Aorta (tissue), 5 donors: ENCODE measurements at regions of chr3 and their contacts with region 1.

Region 1: DNA sequence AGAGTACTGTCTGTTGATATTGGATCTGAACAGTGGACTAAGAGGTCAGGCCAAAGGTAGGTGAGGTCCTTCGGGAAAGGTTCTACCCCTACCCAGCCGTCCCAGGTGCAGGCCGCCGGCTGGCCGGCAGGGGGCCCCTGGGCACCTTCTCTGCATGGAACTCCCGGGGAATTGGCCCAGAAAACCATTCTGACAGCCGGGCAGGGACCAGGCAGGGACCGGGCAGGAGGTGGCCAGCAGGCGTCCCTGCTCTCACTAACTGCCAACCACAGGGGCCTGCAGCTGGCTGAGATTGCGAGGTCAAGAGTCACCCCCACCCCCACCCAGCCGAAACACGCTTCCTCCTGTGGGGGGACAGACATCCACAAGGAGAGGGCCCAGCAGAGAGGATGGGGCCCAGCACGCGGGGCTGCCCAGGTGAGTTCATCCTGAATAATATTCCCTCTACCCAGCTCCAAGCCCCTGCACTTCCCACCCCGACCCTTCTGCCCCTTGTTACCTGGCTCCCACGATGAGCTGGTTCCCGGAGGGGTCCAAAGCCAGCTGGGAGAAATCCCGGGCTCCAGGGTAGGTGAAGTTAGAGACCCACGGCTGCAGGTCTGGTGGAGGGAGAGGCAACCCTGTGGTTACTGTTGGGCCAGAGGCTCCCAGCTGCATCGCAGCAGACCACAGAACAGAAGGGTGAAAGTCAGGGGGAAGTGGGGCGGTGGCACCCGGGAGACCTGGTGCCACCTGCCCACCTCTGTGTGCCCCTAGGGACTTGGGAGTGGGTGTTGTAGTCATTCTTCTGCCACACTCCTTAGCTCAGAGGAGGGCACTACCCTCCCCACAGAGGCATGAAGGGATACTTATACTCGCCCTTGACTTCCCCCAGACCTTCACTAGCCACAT is 84.4 kb downstream of the SEMA5B start:
- DNase-seq: peak; percentile 82 to 90
- ATAC-seq: peak; percentile 88
- H3K4me3 ChIP-seq: no peak overlapping the region
- H3K27ac ChIP-seq: no peak overlapping the region
- H3K4me1 ChIP-seq: no peaks in the 10 kb centered on the region
- H3K27me3 ChIP-seq: no peaks in the 10 kb centered on the region

Region 2: DNA sequence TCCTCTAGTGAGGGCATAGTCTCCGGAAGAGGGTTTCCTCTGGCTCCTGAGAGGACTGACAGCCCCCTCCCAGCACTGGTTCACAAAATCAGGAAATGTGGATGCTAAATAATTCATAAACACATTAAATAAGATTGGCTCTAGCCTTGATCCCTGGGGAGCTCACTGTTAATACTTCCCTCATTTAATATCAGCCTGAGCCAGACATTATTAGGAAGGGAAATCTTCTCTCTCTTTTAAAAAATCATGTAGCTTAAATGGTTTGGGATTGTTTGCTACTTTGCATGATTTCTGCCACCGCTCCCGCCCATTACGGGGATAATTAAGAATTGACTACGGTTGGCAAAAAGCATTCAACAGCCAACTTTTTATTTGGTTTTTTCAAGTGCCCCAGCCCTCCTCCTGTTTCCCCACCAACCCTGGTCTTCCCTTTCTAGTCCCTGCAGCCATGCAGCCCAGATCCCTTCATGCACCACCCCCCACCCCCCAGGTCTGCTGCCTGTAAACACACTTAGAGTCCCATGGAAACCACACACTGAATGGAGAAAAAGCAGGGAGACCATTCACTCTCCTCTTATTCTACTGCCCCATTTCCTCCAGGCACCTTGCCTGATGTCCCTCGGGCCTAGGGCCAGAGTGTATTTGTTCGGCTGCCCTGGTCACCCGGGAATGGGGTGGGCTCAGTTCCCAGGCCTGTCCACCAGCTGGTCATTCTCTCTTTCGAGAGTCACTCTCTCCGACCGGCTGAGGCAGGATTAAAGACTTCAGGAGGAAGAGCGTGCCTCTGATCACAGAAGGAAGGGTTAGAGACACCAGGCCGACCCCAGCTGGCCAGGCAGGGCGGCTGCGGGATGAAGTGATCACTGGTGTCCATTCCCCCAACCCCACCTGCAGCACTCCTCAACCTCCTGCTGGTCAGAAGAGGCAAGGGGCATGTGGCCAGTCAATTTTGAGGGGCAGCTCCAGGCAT is 39.3 kb after region 1 on chr3:
- intact Hi-C with region 1: loop called in 1 of 2 experiments (anchors 5 kb)
- DNase-seq: no peak
- ATAC-seq: no peak
- H3K4me3 ChIP-seq: no peak overlapping the region
- H3K27ac ChIP-seq: no peak overlapping the region
- H3K4me1 ChIP-seq: peaks cover 0 to 9% of the 10 kb centered on the region in 2 donors
- H3K27me3 ChIP-seq: no peaks in the 10 kb centered on the region

Region 3: GRCh38 chr3:123028233-123028828 is 85.1 kb after region 1 on chr3:
- intact Hi-C with region 1: loop called (anchors 1 to 2 kb)
- DNase-seq: no peak
- ATAC-seq: peak; percentile 77
- H3K4me3 ChIP-seq: peak overlapping the region; percentile 40 to 65
- H3K27ac ChIP-seq: no peak overlapping the region
- H3K4me1 ChIP-seq: no peaks in the 10 kb centered on the region
- H3K27me3 ChIP-seq: no peaks in the 10 kb centered on the region

Region 4: DNA sequence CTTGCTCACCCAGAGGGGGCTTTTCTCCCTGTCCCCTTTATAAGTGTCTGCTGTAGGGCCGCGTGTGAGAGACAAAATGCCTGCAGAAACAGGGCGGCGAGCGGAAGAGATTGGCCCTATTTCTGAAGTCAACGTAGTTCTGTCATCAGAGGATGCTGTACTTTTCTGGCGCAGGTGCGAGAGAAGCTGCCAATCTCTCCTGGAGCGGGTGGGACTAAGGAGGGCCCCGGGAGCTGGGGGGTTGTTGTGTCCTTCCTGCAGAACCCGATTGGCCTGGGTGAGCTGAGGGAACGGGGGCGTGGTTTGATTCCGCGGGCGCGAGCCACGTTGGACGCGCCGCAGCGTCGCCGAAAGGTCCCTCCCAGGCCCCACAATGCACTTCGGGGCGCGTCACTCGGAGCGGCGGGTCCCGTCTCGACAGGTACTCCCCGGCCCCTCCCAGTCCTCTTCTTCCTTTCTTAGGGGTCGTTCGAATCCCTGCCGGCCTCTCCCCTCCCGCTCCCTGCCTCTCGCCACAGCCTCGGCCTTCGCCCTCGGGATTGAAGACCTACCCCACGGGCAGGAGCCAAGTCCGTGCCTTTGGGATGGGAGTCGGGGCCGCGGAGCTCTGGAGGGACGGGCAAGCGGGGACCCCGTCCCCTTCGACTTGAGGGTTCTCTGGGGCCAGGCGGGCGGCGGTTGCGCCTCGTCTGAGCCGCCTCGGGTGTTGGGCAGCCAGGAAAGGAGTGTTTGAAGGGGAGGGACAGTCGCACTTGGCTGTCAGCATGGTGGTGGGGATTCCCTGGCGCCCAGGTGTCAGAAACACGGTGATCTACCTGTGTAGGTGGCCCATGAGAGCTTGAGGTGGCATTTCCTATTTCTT is 258.6 kb after region 1 on chr3 and contains the start of gene SEC22A:
- intact Hi-C with region 1: no loop called
- DNase-seq: peak; percentile 96 to 97
- ATAC-seq: peak; percentile 97
- H3K4me3 ChIP-seq: peak within 1 kb of the TSS; percentile 52 to 91
- H3K27ac ChIP-seq: peak within 1 kb of the TSS in 1 of 2 donors; percentile 4
- H3K4me1 ChIP-seq: no peaks in the 10 kb centered on the region
- H3K27me3 ChIP-seq: no peaks in the 10 kb centered on the region
- total RNA-seq, gene SEC22A: 16.1 to 17.3 TPM